ENCODE measurements at regions of chr17 and their contacts with region 1.

Region 1: DNA sequence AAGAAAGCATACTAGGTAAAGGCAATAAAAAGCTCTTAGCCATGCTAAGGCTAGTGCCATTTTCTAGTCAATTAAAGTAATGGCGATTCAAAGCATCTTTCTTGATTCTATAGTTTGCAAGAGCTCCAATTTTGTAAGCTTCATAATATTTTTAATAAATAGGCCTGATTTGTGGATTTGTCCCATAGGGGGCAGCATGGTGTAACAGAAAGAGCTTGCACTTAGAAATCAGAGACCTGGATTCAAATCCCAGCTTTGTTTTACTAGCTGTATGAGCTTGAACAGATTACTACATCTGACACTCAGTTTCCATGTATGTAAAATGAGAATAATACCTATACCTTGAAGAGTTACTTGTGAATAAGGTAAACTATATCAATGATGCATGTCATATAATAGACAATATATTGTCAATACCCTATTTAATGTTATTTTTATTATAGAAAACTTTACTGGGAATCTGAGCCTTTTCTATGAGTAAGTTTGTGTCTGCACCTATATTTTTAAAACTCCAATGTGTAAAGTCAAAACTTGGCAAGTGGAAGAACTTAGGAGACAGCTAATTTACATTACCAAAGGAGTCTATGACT is 93.6 kb upstream of the NOG start:
- DNase-seq: no peak
- ATAC-seq: no peak
- H3K4me3 ChIP-seq: no peak overlapping the region
- H3K27ac ChIP-seq: no peak overlapping the region
- H3K4me1 ChIP-seq: no peaks in the 10 kb centered on the region
- H3K27me3 ChIP-seq: 0 out of 4 replicates have a peak, but pooled peaks cover 0 to 4% of the 10 kb centered on the region in 2 experiments
- CTCF ChIP-seq: peak in 1 of 3 experiments; percentile 26; a peak in 1 of 6 replicates
- EP300 ChIP-seq: no peak
- POLR2A ChIP-seq: no peak
- RAD21 ChIP-seq: peak; percentile 42; the same call in 1 of the 2 replicates

Region 2: GRCh38 chr17:56416682-56417351 is 83.1 kb before region 1 on chr17:
- CTCF ChIA-PET with region 1: no interaction called
- POLR2A ChIA-PET with region 1: no interaction called
- RAD21 ChIA-PET with region 1: no interaction called
- SMC1A ChIA-PET with region 1: no interaction called
- in situ Hi-C with region 1: no loop called
- intact Hi-C with region 1: no loop called
- DNase-seq: no peak
- ATAC-seq: no peak
- H3K4me3 ChIP-seq: no peak overlapping the region
- H3K27ac ChIP-seq: no peak overlapping the region
- H3K4me1 ChIP-seq: no peaks in the 10 kb centered on the region
- H3K27me3 ChIP-seq: no peaks in the 10 kb centered on the region; a peak in 1 of 4 replicates
- CTCF ChIP-seq: no peak
- EP300 ChIP-seq: no peak
- POLR2A ChIP-seq: no peak
- RAD21 ChIP-seq: no peak

Region 3: DNA sequence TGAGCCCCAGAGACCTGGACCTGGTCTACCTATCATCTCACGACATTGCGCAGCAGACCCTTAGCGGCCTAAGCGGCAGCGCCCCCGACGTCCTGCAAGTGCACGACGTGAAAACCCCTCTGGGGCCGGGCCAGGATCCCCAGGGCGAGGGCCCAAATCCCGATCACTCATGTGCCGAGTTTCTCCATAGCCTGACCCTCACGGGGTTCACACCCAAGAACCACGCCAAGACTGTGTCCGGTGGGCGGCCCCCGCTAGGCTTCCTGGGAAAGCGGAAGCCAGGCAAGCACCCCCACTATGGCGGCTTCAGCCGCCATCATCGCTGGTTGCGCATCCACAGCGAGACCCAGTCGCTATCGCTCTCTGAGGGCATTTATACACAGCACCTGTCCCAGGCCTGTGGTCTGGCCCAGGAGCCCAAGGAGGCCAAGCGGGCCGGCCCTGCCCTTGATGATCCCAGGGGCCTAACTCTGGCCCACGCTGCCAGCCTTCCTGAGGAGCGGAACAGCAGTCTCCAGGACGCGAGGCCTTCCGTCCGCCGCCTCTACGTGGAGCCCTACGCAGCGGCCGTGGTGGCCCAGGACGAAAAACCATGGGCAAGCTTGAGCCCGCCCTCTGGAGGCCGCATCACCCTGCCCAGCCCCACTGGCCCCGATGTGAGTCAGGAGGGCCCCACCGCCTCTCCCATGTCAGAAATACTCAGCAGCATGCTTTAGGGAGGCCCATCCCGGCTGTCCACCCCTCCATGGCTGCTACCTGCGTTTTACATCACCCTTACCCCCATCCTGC is 10.9 kb after region 1 on chr17:
- CTCF ChIA-PET with region 1: interaction called, 10 read pairs
- POLR2A ChIA-PET with region 1: no interaction called
- RAD21 ChIA-PET with region 1: no interaction called
- SMC1A ChIA-PET with region 1: interaction called, 6 read pairs
- in situ Hi-C with region 1: no loop called
- intact Hi-C with region 1: no loop called
- DNase-seq: no peak
- ATAC-seq: no peak
- H3K4me3 ChIP-seq: no peak overlapping the region
- H3K27ac ChIP-seq: no peak overlapping the region
- H3K4me1 ChIP-seq: no peaks in the 10 kb centered on the region
- H3K27me3 ChIP-seq: no peaks in the 10 kb centered on the region; a peak in 1 of 4 replicates
- CTCF ChIP-seq: no peak
- EP300 ChIP-seq: no peak
- POLR2A ChIP-seq: no peak
- RAD21 ChIP-seq: no peak

Measured in GM12878 (cell line).